Left cardiac atrium (tissue), 4 donors: ENCODE measurements at regions of chr2 and their contacts with region 1.

Region 1: GRCh38 chr2:158753641-158754611 is 41.2 kb upstream of the DAPL1 start:
- DNase-seq: no peak
- ATAC-seq: peak; percentile 89 to 93

Region 2: GRCh38 chr2:158025255-158025996 is 728.5 kb before region 1 on chr2:
- intact Hi-C with region 1: loop called (anchors 5 kb)
- DNase-seq: no peak
- ATAC-seq: no peak

Region 3: DNA sequence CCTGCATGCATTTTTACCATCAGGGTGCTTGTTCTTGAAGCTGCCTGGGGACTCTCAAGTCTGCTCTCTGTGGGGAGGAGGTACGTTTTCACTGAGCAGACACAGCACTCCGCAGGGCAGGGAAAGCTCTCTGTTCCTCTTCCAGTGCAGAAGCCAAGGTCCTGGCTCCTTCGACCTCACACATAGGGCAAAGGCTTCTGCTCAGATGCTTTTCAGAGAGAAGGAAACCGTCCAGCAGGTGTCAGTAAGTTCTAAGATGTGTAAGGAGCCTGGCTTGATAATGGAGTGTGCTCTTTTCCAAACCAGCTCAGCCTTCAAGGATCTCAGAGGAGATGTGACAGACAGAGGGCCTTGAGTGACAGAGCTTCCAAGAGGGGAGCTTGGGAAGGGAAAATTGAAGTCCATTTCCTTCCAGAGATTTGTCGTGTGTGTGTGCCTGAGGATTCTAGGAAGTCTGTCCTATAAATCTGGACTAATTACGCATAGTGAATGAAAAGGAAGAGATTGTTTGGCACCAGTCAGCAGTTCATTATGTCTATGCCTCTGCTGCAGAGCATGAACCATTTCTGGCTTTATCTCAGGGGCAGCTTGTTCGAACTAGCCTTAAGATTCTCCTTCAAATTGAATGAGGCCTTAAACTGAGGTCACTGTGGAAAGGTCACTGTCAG is 719.6 kb before region 1 on chr2:
- intact Hi-C with region 1: loop called (anchors 5 kb)
- DNase-seq: peak; percentile 24
- ATAC-seq: peak; percentile 67 to 82

Region 4: DNA sequence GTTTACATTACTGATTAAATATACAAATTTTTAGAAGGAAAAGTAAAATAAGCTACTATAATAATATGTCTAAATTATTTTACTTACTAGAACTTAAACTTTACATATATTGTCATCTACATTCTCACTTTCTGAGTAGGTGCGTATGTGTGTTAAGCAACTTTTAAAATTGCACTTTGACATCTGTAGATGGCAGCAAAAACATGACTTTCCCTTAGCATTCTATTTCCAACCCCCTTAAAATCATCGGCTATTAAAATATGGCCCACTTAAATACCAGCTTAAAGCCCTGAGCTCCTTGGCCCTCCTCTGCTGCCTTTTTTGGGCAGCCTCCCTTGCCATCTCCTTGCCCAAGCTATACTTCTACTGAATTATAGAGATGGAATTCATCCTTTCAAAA is 574.3 kb before region 1 on chr2:
- intact Hi-C with region 1: loop called (anchors 5 kb)
- DNase-seq: no peak
- ATAC-seq: peak in 1 of 2 donors; percentile 48

Region 5: GRCh38 chr2:158456309-158457066 is 297.4 kb before region 1 on chr2 and contains the starts of genes CCDC148 and PKP4:
- intact Hi-C with region 1: loop called (anchors 5 to 10 kb)
- DNase-seq: peak; percentile 92
- ATAC-seq: peak; percentile 95 to 96
- total RNA-seq, gene CCDC148: 1.1 to 2.0 TPM
- total RNA-seq, gene PKP4: 62.5 to 64.8 TPM

Region 6: GRCh38 chr2:158729873-158730620 is 23.9 kb before region 1 on chr2:
- intact Hi-C with region 1: no loop called
- DNase-seq: no peak
- ATAC-seq: no peak